ENCODE measurements at regions of chr1 and their contacts with region 1.

Region 1: GRCh38 chr1:19704247-19705113 is 39.8 kb downstream of the HTR6 start:
- DNase-seq: peak; percentile 71
- H3K4me3 Mint-ChIP-seq: no peak overlapping the region
- H3K27ac Mint-ChIP-seq: no peak overlapping the region
- H3K4me1 Mint-ChIP-seq: peaks cover 6% of the 10 kb centered on the region
- H3K27me3 Mint-ChIP-seq: no peaks in the 10 kb centered on the region

Region 2: GRCh38 chr1:19445417-19446342 is 258.8 kb before region 1 on chr1:
- CTCF ChIA-PET with region 1: no interaction called
- POLR2A ChIA-PET with region 1: no interaction called
- intact Hi-C with region 1: no loop called
- DNase-seq: no peak
- H3K4me3 Mint-ChIP-seq: no peak overlapping the region
- H3K27ac Mint-ChIP-seq: peak overlapping the region; percentile 63
- H3K4me1 Mint-ChIP-seq: peaks cover 85% of the 10 kb centered on the region
- H3K27me3 Mint-ChIP-seq: no peaks in the 10 kb centered on the region

Region 3: DNA sequence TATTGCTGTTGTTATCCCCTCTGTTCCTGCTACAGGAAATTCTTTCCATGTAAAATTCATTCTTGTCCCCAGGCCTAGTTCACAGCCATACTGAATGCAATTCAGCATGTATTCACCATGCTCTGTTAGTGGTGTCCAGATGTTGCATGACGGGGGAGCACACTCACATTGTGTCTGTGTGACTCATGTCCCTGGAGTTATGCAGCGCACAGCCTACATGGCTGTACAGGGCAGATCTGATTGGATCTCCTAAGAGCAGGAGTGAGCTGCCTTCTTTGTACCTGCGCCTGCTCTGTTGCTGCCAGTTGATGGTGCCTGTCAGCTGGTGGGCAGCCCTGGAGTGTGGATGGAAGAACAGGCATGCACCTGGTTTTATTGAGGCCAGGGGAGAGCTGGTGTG is 22.2 kb before region 1 on chr1:
- CTCF ChIA-PET with region 1: interaction called, 12 read pairs
- POLR2A ChIA-PET with region 1: no interaction called
- intact Hi-C with region 1: no loop called
- DNase-seq: no peak
- H3K4me3 Mint-ChIP-seq: no peak overlapping the region
- H3K27ac Mint-ChIP-seq: no peak overlapping the region
- H3K4me1 Mint-ChIP-seq: peaks cover 1% of the 10 kb centered on the region
- H3K27me3 Mint-ChIP-seq: no peaks in the 10 kb centered on the region

Region 4: GRCh38 chr1:19688041-19688842 is 16.2 kb before region 1 on chr1:
- CTCF ChIA-PET with region 1: interaction called, 13 read pairs
- POLR2A ChIA-PET with region 1: no interaction called
- intact Hi-C with region 1: no loop called
- DNase-seq: peak; percentile 51
- H3K4me3 Mint-ChIP-seq: no peak overlapping the region
- H3K27ac Mint-ChIP-seq: peak overlapping the region; percentile 67
- H3K4me1 Mint-ChIP-seq: peaks cover 28% of the 10 kb centered on the region
- H3K27me3 Mint-ChIP-seq: no peaks in the 10 kb centered on the region

Region 5: DNA sequence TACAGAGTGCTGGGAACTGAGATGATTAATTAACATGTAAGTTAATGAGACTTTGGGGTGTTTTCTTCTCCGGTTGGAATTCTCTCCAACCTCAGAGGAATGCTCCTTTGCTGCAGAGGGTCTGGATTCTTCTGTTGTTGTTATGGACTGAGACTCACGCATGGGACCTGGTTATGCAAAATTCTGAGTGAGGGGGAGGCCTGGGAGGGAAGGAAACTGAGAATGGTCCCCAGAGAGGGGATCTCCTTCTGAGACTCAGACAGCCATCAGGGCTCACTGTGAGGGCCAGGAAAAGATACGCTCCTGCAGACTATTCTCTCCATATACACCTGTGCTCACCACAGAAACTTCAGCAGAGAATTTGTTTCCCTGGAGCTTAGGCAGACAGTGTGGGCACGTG is 16.5 kb after region 1 on chr1:
- CTCF ChIA-PET with region 1: interaction called, 41 read pairs
- POLR2A ChIA-PET with region 1: no interaction called
- intact Hi-C with region 1: no loop called
- DNase-seq: no peak
- H3K4me3 Mint-ChIP-seq: no peak overlapping the region
- H3K27ac Mint-ChIP-seq: no peak overlapping the region
- H3K4me1 Mint-ChIP-seq: no peaks in the 10 kb centered on the region
- H3K27me3 Mint-ChIP-seq: no peaks in the 10 kb centered on the region

Measured in activated CD4-positive, alpha-beta memory T cell treated with anti-CD3 and anti-CD28 coated beads for 36 hours (primary cell).